ENCODE measurements at regions of chr1 and their contacts with region 1.

Region 1: DNA sequence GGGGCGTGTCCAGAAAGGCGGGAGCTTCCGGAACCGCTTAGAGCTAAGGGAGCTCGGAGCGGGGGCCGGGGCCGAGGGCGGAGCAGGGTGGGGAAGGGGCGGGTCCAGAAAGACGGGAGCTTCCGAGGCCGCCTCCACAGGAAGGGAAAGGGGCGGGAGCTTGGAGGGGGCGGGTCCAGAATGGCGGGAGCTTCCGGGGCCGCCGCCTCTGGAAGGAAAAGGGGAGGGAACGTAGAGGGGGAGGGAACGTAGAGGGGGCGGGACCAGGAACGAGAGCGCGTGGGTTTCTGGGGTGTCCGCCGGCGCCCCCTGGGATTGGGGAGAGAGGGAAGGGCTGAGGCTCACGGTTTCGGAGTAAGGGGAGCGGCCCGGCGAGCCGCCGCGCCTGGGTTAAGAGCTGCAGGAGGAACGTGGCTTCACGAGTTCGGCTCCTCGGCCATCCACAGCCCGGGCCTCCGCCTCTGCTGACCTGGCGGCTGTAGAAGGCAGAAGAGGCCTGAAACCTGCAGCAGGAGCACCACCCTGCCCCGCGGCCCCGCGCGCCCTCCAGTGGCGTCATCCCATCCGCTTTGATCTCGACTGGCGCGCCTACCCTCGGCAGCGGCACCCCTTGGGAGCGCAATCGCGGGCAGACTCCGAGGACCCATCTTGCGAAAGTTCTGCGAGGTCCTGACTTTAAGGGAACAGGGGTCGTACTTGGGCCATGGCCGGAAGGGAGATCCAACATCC is 22.9 kb upstream of the HPDL start:
- DNase-seq: peak; percentile 99

Region 2: DNA sequence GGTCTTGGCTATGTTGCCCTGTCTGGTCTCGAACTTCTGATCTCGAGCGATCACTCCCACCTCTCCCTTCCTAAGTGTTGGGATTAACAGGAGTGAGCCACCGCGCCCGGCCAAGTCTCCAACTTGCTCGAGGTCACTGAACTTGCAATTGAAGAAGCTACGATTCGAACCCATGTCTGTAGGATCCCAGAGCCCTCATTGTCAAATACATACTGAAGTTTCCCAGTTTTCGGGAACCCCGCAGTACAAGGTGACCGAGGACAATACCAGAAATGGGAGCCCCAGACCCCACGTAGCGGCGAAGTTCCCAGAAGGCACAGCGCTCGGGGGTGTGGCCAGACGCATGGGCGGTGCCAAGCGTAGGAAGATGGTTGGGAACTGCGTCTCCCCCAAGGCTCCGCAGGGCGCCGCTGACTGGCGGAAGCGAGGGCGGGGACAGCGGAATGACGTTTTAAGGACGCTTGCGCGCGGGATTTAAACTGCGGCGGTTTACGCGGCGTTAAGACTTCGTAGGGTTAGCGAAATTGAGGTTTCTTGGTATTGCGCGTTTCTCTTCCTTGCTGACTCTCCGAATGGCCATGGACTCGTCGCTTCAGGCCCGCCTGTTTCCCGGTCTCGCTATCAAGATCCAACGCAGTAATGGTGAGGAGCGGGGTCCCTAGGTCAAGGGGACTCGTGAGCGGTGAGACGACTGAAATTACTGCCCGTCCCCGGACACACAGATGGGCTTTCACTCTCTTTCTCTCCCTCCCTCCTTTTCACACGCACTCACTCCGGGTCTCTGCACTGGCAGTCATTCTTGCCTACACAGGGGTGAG is 564.2 kb before region 1 on chr1 and contains the start of gene KIF2C:
- intact Hi-C with region 1: loop called (anchors 5 kb)
- DNase-seq: peak; percentile 98
- total RNA-seq, gene KIF2C: 1.3 TPM

Region 3: GRCh38 chr1:44835738-44836675 is 467.7 kb before region 1 on chr1:
- intact Hi-C with region 1: loop called (anchors 5 kb)
- DNase-seq: peak; percentile 91

Region 4: DNA sequence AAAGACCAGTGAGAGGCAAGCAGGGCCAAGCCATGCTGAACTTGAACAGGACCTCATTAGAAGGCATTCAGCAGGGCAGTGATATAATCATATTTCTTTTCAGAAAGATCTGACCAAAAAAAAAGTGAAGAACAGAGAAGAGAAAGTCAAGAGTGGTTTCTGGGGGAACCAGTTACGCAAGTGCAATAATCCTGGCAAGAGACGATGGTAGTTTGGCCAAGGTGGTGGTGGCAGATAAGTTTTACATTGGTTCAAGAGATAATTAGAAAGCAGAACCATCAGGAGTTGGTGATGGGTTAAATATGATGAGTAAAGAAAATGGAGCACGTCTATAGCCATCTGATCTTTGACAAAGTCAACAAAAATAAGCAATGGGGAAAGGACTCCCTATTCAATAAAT is 151.6 kb before region 1 on chr1:
- intact Hi-C with region 1: no loop called
- DNase-seq: no peak

Region 5: DNA sequence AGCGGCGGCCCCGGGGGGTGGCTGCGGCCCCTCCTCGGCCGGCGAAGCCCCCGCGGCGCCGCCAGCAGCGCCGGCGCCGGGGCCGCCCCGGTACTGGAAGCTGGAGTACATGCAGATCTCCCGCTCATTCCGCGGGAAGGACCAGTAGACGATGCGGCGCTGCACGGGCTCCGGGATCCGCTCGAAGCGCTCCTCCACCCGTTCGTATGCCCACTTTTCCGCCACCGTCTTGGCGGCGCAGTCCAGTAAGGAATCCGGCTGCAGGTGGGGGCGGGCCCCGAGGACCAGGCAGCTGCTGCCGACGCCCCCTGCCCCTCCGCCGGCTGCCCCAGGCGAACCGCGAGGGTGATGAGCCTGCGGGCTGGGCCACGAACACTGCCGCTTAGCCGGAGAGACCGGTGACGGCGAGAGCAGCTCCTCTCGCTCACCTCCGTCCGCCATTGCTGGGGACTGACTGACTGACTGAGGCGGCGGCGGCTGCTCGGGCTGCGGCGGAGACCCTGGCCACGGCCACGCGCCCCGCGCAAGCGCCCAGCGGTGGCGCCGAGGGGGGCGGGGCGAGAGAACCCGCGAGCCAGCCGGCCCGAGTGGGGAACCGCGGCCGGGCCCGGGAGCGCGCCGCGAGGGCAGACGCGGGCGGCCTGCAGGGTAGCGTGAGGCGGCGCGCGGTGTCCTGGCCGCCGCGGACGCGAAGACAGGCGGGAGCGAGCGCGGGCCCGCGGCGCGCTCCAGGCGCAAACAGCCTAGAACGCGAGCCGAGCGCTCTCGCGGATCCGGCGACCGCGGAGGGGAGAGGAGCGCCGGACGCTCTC is 97.6 kb before region 1 on chr1 and contains the start of gene ZSWIM5:
- intact Hi-C with region 1: loop called (anchors 2 kb)
- DNase-seq: peak; percentile 81
- total RNA-seq, gene ZSWIM5: 1.5 TPM

Region 6: DNA sequence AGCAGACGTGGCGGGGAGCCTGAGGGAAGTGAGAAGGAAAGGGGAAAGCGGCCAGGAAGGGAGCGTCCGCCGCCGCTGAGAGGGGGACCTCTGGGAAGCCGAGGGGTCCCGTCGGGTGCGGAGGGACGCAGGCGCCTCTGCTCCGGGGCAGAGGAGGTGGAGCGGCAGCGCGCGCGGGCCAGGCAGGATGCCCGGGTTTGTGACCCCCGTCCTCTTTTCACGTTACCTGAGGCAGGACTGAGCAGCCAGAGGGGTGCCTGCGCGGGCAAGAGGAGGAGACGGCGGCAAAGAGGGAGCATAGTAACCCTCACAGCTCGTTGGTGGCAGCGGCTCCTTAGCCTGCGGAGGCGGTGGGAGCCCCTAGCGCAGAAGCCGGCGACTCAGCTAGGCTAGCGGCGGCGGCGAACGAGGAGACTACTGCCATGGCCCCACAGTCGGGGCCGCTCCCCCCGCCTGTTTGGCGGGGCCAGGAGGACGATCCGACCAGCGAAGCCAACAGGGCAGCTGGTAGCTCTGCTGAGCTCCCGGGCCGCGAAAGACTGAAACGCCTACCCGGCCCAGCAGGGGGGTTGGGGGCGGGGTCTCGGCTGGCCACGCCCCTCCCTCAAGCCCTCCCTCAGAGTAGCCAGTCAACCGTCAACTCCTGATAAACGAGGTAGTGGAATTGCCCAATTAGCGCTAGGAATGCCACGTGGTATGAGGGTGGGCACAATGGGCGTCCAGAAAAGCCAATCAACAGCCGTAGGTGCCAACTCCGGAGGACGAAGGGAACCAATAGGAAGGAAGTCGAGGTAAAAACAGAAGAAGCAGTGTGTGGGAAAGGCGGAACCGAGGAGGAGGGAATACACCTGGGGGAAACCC is 187.1 kb after region 1 on chr1 and contains the start of gene TESK2:
- intact Hi-C with region 1: loop called (anchors 5 kb)
- DNase-seq: peak; percentile 98
- total RNA-seq, gene TESK2: 1.0 TPM

Region 7: GRCh38 chr1:46539972-46540371 is 1236.2 kb after region 1 on chr1:
- intact Hi-C with region 1: no loop called
- DNase-seq: no peak

Measured in cardiac septum (tissue), 1 donor.